PC-3 (cell line): ENCODE measurements at regions of chr6 and their contacts with region 1.

Region 1: GRCh38 chr6:33477864-33478263 is 23.5 kb downstream of the ZBTB9 start:
- DNase-seq: no peak
- ATAC-seq: no peak
- H3K4me3 ChIP-seq: no peak overlapping the region
- H3K27ac ChIP-seq: no peak overlapping the region
- H3K4me1 ChIP-seq: no peaks in the 10 kb centered on the region
- H3K27me3 ChIP-seq: peaks cover 4% of the 10 kb centered on the region; the same call in 1 of the 2 replicates
- CTCF ChIP-seq: no peak

Region 2: GRCh38 chr6:33095681-33096080 is 382.2 kb before region 1 on chr6:
- CTCF ChIA-PET with region 1: no interaction called
- POLR2A ChIA-PET with region 1: no interaction called
- intact Hi-C with region 1: no loop called
- DNase-seq: no peak
- ATAC-seq: no peak
- H3K4me3 ChIP-seq: no peak overlapping the region
- H3K27ac ChIP-seq: no peak overlapping the region
- H3K4me1 ChIP-seq: no peaks in the 10 kb centered on the region
- H3K27me3 ChIP-seq: peaks cover 12% of the 10 kb centered on the region
- CTCF ChIP-seq: no peak

Region 3: DNA sequence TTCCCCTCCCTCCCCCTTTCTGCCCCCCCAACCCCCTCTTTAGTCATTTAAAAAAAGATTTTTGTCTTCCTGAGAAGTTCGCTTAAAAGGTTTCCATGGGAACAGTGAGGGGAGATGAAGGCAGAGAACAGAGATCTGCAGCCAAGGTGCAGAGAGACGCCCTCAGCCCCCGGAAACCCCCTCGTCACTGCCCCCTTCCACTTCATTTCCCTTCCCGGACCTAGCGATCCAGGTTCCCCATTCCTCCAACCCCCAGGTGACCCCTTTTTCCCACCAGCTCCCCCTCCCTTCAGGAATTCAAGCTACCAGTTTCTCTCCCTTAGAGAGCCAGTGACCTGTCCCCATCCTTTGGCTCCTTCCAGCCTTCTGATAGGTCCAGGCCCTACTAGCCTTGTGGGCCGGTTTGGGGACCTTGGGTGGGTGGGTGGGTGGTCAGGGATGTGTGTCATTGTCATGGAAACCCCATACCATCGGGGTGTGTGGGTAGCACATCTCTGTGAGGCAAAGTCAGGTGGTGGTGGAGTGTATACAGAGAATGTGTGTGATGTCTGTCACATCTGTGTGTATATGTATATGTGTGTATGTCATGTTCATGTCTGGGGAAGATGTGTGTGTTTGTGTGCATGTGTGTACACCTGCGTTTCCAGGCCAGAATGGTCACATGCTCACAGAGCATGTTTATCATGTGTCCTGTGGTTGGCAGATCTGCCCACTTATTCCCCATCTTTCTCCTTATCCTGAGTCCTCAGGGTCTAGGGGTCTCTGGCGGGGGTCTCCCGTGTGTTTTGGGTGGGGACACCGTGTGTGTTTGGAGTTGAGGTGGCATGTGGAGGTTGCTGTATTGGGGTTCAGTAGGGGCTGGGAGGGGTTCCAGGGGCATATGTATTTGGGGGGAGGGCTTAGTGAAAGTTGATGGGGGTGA is 51.0 kb before region 1 on chr6:
- CTCF ChIA-PET with region 1: no interaction called
- POLR2A ChIA-PET with region 1: interaction called, 17 read pairs
- intact Hi-C with region 1: no loop called
- DNase-seq: no peak
- ATAC-seq: no peak
- H3K4me3 ChIP-seq: peak overlapping the region; percentile 75
- H3K27ac ChIP-seq: no peak overlapping the region
- H3K4me1 ChIP-seq: peaks cover 23% of the 10 kb centered on the region
- H3K27me3 ChIP-seq: no peaks in the 10 kb centered on the region
- CTCF ChIP-seq: no peak

Region 4: DNA sequence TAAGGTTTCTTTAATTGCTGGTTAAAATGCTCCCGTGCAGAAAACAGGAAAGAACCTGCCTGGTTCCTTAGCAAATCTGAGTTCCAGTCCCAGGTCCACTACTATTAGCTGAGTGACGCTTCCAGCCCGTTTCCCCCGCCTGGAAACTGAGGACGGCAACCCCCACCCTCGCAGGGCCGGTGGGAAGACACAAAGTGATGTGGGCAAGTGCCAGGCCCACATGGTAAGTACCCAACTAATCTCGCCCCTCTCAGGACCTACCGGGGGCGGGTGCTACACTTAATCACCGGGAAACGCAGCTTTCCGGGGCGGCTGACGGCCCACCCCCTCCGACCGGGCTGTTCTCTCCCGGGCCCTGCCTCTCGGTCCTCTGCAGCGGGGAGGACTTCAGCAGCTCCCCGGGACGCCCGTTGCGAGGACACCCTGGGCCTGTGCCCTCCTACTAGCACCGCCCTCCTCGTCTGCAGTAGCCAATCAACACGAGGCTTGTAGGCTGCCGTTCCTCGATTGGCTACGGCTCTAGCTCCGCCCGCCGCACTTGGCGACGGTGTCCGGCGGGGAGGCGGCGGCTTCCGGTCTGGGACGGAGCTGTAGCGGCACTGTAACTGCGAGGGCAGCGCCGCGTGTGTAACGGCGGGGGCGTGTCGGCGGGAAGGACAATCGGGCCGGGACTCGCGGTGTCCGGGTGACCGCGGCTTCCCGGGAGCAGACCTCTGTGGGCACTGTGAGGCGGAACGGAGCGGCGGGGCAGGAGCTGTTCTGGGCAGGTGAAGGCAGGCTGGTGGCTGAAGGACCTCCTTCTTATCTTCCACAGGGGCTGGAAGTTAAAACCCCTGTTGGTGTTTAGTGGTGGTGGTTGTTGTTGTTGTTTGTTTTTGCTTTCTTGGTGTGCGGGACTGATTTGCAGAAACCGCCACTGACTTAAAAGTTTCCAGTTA is 23.6 kb before region 1 on chr6 and contains the start of gene ZBTB9:
- CTCF ChIA-PET with region 1: no interaction called
- POLR2A ChIA-PET with region 1: no interaction called
- intact Hi-C with region 1: no loop called
- DNase-seq: peak; percentile 98
- ATAC-seq: peak; percentile 97
- H3K4me3 ChIP-seq: peak within 1 kb of the TSS; percentile 86
- H3K27ac ChIP-seq: peak within 1 kb of the TSS; percentile 10; the same call in 1 of the 2 replicates
- H3K4me1 ChIP-seq: peaks cover 13% of the 10 kb centered on the region
- H3K27me3 ChIP-seq: no peaks in the 10 kb centered on the region
- CTCF ChIP-seq: no peak
- total RNA-seq, gene ZBTB9: 7.0 and 9.1 TPM in 2 replicates

Region 5: DNA sequence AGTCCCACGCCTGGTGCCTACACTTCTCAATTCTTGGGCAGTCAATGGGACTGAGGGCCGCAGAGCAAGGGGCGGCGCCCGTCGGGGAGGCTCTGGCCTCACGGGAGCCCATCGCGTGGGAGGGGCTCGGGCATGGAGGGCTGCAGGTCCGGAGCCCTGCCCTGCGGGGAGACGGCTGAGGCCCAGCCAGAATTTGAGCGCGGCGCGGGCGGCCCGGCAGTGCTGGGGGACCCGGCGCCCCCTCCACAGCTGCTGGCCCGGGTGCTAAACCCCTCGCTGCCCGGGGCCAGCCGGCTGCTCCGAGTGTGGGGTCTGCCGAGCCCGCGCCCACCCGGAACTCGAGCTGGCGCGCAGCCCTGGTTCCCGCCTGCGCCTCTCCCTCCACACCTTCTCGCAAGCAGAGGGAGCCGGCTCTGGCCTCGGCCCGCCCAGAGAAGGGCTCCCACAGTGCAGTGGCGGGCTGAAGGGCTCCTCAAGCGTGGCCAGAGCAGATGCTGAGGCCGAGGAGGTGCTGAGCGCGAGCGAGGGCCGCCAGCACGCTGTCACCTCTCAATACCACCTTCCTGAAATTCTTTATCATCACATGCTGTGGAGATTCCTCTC is 43.7 kb after region 1 on chr6:
- CTCF ChIA-PET with region 1: no interaction called
- POLR2A ChIA-PET with region 1: no interaction called
- intact Hi-C with region 1: no loop called
- DNase-seq: no peak
- ATAC-seq: no peak
- H3K4me3 ChIP-seq: no peak overlapping the region
- H3K27ac ChIP-seq: no peak overlapping the region
- H3K4me1 ChIP-seq: no peaks in the 10 kb centered on the region
- H3K27me3 ChIP-seq: no peaks in the 10 kb centered on the region
- CTCF ChIP-seq: no peak